ENCODE measurements at regions of chr5 and their contacts with region 1.

Region 1: GRCh38 chr5:84274585-84275468 is 109.9 kb downstream of the EDIL3 start:
- DNase-seq: peak in 1 of 2 donors; percentile 28
- H3K4me3 ChIP-seq: no peak overlapping the region
- H3K27ac ChIP-seq: no peak overlapping the region
- H3K4me1 ChIP-seq: peaks cover 0 to 40% (median 0%) of the 10 kb centered on the region in 4 donors
- H3K27me3 ChIP-seq: no peaks in the 10 kb centered on the region
- CTCF ChIP-seq: peak; percentile 39 to 55

Region 2: DNA sequence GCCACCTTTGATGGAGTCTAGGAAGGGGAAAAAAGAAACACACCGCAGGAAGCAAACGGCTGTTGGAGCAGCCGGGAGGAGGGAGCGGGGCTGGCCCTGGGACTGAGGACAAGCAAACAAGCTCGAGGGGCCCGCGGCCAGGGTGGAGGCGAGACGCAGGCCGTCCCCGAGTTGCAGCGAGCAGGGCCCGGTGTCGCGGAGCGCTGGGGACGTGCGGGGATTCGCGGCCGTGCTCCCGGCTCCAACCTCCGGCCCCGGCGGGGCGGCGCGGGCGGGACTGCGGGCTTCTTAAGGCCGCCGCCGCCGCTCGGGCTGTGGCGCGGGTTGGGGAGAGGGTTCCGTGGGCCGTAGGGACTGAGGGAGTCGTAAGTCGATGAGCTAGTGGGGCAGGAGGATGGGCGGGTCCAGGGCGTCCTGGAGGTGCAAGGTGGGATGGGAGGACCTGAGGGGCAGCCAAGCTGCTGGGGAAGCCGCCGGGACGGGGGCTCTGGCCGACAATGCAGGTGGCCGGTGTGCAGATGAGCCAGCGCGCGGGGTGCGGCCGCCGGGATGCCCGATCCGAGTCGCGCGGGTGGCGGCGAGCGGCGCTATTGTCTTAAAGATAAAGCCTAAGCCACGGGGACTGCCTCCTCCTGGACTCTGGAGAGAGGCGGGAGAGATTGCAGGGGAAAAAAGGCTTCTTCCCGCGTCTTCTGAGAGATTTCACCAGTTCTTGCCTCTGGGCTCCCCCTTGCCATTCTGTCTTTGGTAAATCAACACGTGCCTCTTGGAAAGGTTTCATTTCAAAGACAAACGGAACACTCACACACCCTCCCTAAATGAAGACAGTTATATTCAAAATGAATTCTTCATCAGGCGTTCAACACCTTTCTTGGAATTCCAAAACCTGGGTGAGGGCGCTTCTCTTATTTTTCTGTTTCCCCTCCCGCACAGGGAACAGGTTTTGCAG is 552.6 kb before region 1 on chr5:
- intact Hi-C with region 1: loop called (anchors 10 kb)
- DNase-seq: peak; percentile 60 to 84
- H3K4me3 ChIP-seq: peak overlapping the region; percentile 67 to 73
- H3K27ac ChIP-seq: peak overlapping the region; percentile 75 to 76
- H3K4me1 ChIP-seq: peaks cover 0 to 11% (median 5%) of the 10 kb centered on the region in 4 donors
- H3K27me3 ChIP-seq: no peaks in the 10 kb centered on the region
- CTCF ChIP-seq: peak; percentile 24 to 30